Psoas muscle (tissue), 8 donors: ENCODE measurements at regions of chr6 and their contacts with region 1.

Region 1: DNA sequence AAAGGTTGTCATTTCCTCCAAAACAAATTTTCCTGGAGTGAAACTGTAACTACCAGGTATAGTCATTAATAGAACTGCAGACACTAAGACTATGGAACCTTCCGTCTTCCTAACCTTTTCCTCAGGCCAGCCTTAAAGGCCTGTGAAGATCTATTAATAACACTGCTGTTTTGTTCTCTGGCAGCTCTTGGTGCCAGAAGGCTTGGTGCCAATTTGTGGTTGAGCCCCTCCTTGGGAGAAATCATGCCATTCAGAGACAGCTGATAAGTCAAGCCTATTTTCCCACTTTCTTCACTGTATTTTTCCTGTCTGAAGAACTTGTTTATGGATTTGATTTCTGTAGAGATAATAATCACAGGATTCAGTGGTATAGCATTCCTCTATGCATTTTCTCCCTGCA is 64.8 kb downstream of the HCRTR2 start:
- DNase-seq: no peak
- ATAC-seq: no peak
- H3K4me3 ChIP-seq: no peak overlapping the region
- H3K27ac ChIP-seq: no peak overlapping the region
- H3K4me1 ChIP-seq: no peaks in the 10 kb centered on the region
- H3K27me3 ChIP-seq: no peaks in the 10 kb centered on the region
- CTCF ChIP-seq: no peak

Region 2: DNA sequence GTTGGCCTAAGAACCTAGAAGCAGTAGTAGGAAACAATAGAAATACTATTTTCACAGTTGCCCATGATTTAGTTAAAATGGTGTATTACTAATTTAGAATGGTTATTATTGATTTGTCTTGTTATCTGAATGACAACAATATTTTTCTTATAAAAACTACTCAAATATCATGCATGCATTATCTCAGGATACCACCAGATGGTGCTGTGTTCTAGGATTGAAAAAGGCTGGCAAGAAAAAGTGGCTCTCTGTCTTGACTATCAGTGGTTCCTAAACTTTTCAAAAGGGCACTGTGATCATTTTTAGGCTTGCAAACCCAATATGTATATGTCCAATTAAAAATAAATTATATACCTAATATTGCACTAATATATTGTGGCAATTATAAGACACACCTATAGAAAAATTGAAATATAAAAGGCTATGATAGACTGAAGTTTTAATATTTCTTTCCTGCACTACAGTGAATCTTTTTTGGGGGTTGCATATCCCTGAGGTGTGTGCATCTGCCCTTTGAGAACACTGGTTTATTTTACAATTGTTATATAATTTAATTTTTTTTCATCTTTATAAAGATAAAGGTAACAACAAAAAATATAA is 1259.5 kb before region 1 on chr6:
- intact Hi-C with region 1: loop called (anchors 5 to 10 kb)
- DNase-seq: no peak
- ATAC-seq: peak in 3 of 4 donors; percentile 42 to 71 (median 47)
- H3K4me3 ChIP-seq: no peak overlapping the region
- H3K27ac ChIP-seq: no peak overlapping the region
- H3K4me1 ChIP-seq: peaks cover 6% of the 10 kb centered on the region
- H3K27me3 ChIP-seq: no peaks in the 10 kb centered on the region
- CTCF ChIP-seq: peak; percentile 91

Region 3: DNA sequence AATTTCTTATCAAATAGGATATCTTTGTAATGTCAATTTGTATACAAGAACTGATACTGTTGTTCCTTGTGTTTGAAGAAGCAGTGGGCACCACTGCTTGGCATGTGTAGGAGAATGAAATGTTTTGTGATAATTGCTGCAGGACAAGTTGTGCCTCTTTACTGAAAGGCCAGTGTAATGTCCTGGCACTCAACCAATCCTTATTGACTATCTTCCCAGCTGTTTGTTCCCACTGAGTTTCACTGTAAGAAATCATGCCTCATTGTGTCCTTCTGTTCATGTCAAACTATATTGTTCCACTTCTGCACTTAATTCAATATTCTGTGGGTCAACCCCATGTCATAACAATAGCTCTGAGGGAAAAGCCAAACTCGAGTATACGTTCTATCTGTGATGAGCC is 528.6 kb before region 1 on chr6:
- intact Hi-C with region 1: loop called (anchors 5 kb)
- DNase-seq: no peak
- ATAC-seq: no peak
- H3K4me3 ChIP-seq: no peak overlapping the region
- H3K27ac ChIP-seq: no peak overlapping the region
- H3K4me1 ChIP-seq: no peaks in the 10 kb centered on the region
- H3K27me3 ChIP-seq: no peaks in the 10 kb centered on the region
- CTCF ChIP-seq: no peak

Region 4: GRCh38 chr6:54717849-54718455 is 521.1 kb before region 1 on chr6:
- intact Hi-C with region 1: loop called (anchors 5 kb)
- DNase-seq: no peak
- ATAC-seq: peak in 2 of 4 donors; percentile 66 to 67
- H3K4me3 ChIP-seq: no peak overlapping the region
- H3K27ac ChIP-seq: no peak overlapping the region
- H3K4me1 ChIP-seq: no peaks in the 10 kb centered on the region
- H3K27me3 ChIP-seq: no peaks in the 10 kb centered on the region
- CTCF ChIP-seq: peak; percentile 81

Region 5: GRCh38 chr6:55227862-55228261 is 11.2 kb before region 1 on chr6:
- intact Hi-C with region 1: no loop called
- DNase-seq: no peak
- ATAC-seq: no peak
- H3K4me3 ChIP-seq: no peak overlapping the region
- H3K27ac ChIP-seq: no peak overlapping the region
- H3K4me1 ChIP-seq: no peaks in the 10 kb centered on the region
- H3K27me3 ChIP-seq: no peaks in the 10 kb centered on the region
- CTCF ChIP-seq: no peak